ENCODE measurements at regions of chr4 and their contacts with region 1.

Region 1: DNA sequence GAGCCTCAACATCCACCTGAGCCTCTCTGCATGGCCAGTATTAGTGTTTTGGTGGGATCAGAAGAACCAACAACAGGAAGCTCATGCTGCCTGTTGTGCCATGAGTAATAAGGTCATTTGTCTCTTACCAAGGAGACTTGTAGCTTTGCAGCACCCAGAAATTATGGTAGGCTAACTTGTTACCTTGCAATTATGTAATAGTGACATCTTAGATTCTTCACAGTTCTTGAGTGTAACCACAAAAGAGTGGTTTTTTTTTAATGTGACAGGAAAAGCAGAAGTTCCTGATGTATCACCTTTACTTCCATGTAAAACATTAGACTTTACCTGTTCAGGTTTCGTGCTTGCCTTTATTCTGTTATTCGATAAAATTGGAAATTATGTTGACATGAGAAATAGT is 263.9 kb upstream of the CXXC4 start:
- DNase-seq: peak; percentile 22
- ATAC-seq: peak; percentile 31
- H3K4me3 ChIP-seq: no peak overlapping the region
- H3K4me3 Mint-ChIP-seq: no peak overlapping the region
- H3K27ac ChIP-seq: no peak overlapping the region
- H3K27ac Mint-ChIP-seq: peak overlapping the region; percentile 27
- H3K4me1 ChIP-seq: peaks cover 0 to 4% of the 10 kb centered on the region in 2 donors
- H3K4me1 Mint-ChIP-seq: peaks cover 16% of the 10 kb centered on the region
- H3K27me3 ChIP-seq: no peaks in the 10 kb centered on the region
- H3K27me3 Mint-ChIP-seq: no peaks in the 10 kb centered on the region
- CTCF ChIP-seq: no peak

Region 2: GRCh38 chr4:104743215-104743653 is 15.3 kb before region 1 on chr4:
- CTCF ChIA-PET with region 1: no interaction called
- POLR2A ChIA-PET with region 1: no interaction called
- intact Hi-C with region 1: loop called (anchors 2 kb)
- DNase-seq: peak; percentile 71
- ATAC-seq: peak; percentile 91
- H3K4me3 ChIP-seq: peak overlapping the region in 1 of 5 experiments; percentile 50
- H3K4me3 Mint-ChIP-seq: peak overlapping the region; percentile 62
- H3K27ac ChIP-seq: peak overlapping the region; percentile 56 to 63
- H3K27ac Mint-ChIP-seq: peak overlapping the region; percentile 82
- H3K4me1 ChIP-seq: peaks cover 16 to 19% of the 10 kb centered on the region in 2 donors
- H3K4me1 Mint-ChIP-seq: peaks cover 21% of the 10 kb centered on the region
- H3K27me3 ChIP-seq: no peaks in the 10 kb centered on the region
- H3K27me3 Mint-ChIP-seq: no peaks in the 10 kb centered on the region
- CTCF ChIP-seq: no peak

Measured in B cell (primary cell).